ENCODE measurements at regions of chr12 and their contacts with region 1.

Region 1: GRCh38 chr12:120580787-120581723 is at the start of gene POP5:
- DNase-seq: peak; percentile 81 to 98 (median 92)
- ATAC-seq: peak; percentile 92
- H3K4me3 ChIP-seq: peak within 1 kb of the TSS; percentile 91 to 94
- H3K4me3 Mint-ChIP-seq: peak within 1 kb of the TSS; percentile 99
- H3K27ac ChIP-seq: peak within 1 kb of the TSS; percentile 71 to 76
- H3K27ac Mint-ChIP-seq: peak within 1 kb of the TSS; percentile 93
- H3K4me1 ChIP-seq: peaks cover 23% of the 10 kb centered on the region
- H3K4me1 Mint-ChIP-seq: peaks cover 44% of the 10 kb centered on the region
- H3K27me3 ChIP-seq: peaks cover 0 to 7% of the 10 kb centered on the region in 2 experiments
- H3K27me3 Mint-ChIP-seq: peaks cover 12% of the 10 kb centered on the region
- CTCF ChIP-seq: no peak
- total RNA-seq, gene POP5: 18.1 to 19.2 TPM

Region 2: GRCh38 chr12:120283318-120283717 is 297.7 kb before region 1 on chr12:
- CTCF ChIA-PET with region 1: no interaction called
- POLR2A ChIA-PET with region 1: no interaction called
- intact Hi-C with region 1: no loop called
- DNase-seq: no peak
- ATAC-seq: no peak
- H3K4me3 ChIP-seq: no peak overlapping the region
- H3K4me3 Mint-ChIP-seq: no peak overlapping the region
- H3K27ac ChIP-seq: no peak overlapping the region
- H3K27ac Mint-ChIP-seq: no peak overlapping the region
- H3K4me1 ChIP-seq: no peaks in the 10 kb centered on the region
- H3K4me1 Mint-ChIP-seq: no peaks in the 10 kb centered on the region
- H3K27me3 ChIP-seq: no peaks in the 10 kb centered on the region
- H3K27me3 Mint-ChIP-seq: no peaks in the 10 kb centered on the region
- CTCF ChIP-seq: no peak

Region 3: DNA sequence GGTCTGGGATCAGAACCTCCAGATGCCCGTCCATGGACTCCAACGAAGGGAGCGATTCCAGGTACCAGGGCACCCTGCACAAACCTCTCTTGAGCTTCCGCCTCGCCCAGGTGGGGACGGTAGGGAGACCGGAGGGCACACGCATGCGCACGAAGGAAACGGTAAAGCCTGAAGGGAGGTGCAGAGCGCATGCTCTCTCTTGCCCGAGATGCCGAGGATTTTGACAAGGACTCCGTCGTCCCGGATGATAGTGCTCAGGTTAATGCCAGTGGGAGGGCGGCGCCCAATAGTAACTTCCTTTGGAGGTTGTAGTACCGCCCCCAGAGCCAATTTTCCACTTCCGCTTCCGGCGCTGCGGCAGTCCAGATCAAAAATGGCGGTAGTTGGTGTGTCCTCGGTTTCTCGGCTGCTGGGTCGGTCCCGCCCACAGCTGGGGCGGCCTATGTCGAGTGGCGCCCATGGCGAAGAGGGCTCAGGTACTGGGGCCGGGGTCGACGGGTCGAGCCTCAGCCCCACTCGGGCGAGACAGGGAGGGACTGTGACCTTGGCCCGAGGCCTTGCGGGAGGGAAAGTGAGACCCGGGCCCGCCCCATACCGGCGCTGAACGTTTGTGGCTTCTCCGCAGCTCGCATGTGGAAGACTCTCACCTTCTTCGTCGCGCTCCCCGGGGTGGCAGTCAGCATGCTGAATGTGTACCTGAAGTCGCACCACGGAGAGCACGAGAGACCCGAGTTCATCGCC is 143.1 kb before region 1 on chr12 and contains the start of gene COX6A1:
- CTCF ChIA-PET with region 1: interaction called, 3 read pairs
- POLR2A ChIA-PET with region 1: no interaction called
- intact Hi-C with region 1: loop called (anchors 2 to 5 kb)
- DNase-seq: peak; percentile 91 to 100 (median 96)
- ATAC-seq: peak; percentile 95
- H3K4me3 ChIP-seq: peak within 1 kb of the TSS; percentile 74 to 76
- H3K4me3 Mint-ChIP-seq: peak within 1 kb of the TSS; percentile 88
- H3K27ac ChIP-seq: peak within 1 kb of the TSS; percentile 58 to 85
- H3K27ac Mint-ChIP-seq: peak within 1 kb of the TSS; percentile 91
- H3K4me1 ChIP-seq: peaks cover 26% of the 10 kb centered on the region
- H3K4me1 Mint-ChIP-seq: peaks cover 26% of the 10 kb centered on the region
- H3K27me3 ChIP-seq: no peaks in the 10 kb centered on the region
- H3K27me3 Mint-ChIP-seq: peaks cover 3% of the 10 kb centered on the region
- CTCF ChIP-seq: no peak
- total RNA-seq, gene COX6A1: 118 to 124 TPM

Region 4: GRCh38 chr12:120599672-120600552 is 18.9 kb after region 1 on chr12:
- CTCF ChIA-PET with region 1: interaction called, 10 read pairs
- POLR2A ChIA-PET with region 1: no interaction called
- intact Hi-C with region 1: no loop called
- DNase-seq: no peak
- ATAC-seq: no peak
- H3K4me3 ChIP-seq: no peak overlapping the region
- H3K4me3 Mint-ChIP-seq: no peak overlapping the region
- H3K27ac ChIP-seq: no peak overlapping the region
- H3K27ac Mint-ChIP-seq: no peak overlapping the region
- H3K4me1 ChIP-seq: no peaks in the 10 kb centered on the region
- H3K4me1 Mint-ChIP-seq: no peaks in the 10 kb centered on the region
- H3K27me3 ChIP-seq: no peaks in the 10 kb centered on the region
- H3K27me3 Mint-ChIP-seq: peaks cover 10% of the 10 kb centered on the region
- CTCF ChIP-seq: no peak

Region 5: DNA sequence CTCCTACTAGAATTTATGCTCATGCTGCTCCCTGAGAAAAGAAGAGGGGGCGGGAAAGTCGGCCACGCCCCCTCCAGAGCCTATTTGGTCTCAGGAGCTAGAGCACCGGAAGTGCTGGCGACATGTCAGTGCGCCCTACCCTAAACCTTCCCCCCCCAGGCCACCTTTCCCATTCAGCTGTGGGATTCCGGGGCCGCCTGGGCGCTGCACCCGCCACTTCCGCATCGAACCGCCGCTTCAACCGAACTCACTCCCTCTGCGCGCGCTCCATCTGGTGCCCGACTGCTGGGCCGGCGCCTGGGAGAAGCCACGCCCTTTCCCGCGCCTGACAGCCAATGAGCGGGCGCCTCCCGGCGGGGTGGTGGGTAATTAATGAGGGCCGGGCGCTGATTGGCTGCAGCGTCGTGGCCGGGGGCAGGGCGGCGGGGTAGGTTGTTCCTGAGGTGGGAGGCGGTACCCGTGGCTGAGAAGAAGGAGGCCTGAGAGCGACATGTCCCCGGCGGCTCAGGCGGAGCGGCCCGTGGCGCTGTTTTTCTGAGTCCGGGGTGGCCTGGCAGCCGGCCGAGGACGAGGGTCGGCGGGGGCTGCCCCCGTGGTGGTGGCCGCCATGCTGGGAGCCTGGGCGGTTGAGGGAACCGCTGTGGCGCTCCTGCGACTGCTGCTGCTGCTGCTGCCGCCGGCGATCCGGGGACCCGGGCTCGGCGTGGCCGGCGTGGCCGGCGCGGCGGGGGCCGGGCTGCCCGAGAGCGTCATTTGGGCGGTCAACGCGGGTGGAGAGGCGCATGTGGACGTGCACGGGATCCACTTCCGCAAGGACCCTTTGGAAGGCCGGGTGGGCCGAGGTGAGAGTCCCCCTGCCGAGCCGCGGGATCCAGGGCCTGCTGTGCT is 105.9 kb after region 1 on chr12 and contains the start of gene MLEC:
- CTCF ChIA-PET with region 1: no interaction called
- POLR2A ChIA-PET with region 1: no interaction called
- intact Hi-C with region 1: loop called (anchors 1 to 2 kb)
- DNase-seq: peak; percentile 98 to 99 (median 99)
- ATAC-seq: peak; percentile 83
- H3K4me3 ChIP-seq: peak within 1 kb of the TSS; percentile 88 to 90
- H3K4me3 Mint-ChIP-seq: peak within 1 kb of the TSS; percentile 91
- H3K27ac ChIP-seq: peak within 1 kb of the TSS; percentile 80 to 95
- H3K27ac Mint-ChIP-seq: peak within 1 kb of the TSS; percentile 92
- H3K4me1 ChIP-seq: peaks cover 29% of the 10 kb centered on the region
- H3K4me1 Mint-ChIP-seq: peaks cover 39% of the 10 kb centered on the region
- H3K27me3 ChIP-seq: no peaks in the 10 kb centered on the region
- H3K27me3 Mint-ChIP-seq: no peaks in the 10 kb centered on the region
- CTCF ChIP-seq: no peak
- total RNA-seq, gene MLEC: 20.3 to 22.5 TPM

Region 6: DNA sequence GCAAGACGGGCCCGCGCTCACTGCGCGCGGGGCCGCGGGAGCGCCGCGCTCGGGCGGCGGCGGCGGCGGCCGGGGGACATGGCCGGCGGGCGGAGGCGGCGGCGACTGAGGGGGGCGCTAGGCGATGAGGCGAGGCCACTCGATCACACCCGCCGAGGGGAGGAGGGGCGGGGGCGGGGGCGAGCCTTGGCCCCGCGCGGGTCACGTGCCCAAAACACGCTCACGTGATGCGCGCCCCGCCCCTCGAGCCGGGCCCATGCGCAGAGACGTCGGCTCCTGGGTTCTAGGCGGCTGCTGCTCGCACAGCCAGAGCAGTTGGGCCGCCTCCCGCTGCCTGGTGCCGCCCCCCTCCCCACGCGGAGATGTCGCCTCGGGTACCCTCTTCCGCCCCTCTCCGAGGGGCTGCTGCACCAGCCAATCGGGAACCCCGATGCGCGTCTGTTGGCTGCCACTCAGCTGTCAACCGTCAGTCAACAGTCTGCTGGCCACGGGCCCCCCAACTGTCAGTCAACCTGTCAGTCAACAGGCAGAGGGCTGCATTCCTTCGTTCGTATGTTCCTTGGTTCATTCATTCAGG is 323.2 kb after region 1 on chr12 and contains the start of gene SPPL3:
- CTCF ChIA-PET with region 1: no interaction called
- POLR2A ChIA-PET with region 1: no interaction called
- intact Hi-C with region 1: loop called in 1 of 2 experiments (anchors 5 kb)
- DNase-seq: peak; percentile 86 to 96 (median 93)
- ATAC-seq: peak; percentile 75
- H3K4me3 ChIP-seq: peak within 1 kb of the TSS; percentile 76 to 82
- H3K4me3 Mint-ChIP-seq: peak within 1 kb of the TSS; percentile 99
- H3K27ac ChIP-seq: peak within 1 kb of the TSS; percentile 66 to 84
- H3K27ac Mint-ChIP-seq: peak within 1 kb of the TSS; percentile 98
- H3K4me1 ChIP-seq: peaks cover 21% of the 10 kb centered on the region
- H3K4me1 Mint-ChIP-seq: peaks cover 32% of the 10 kb centered on the region
- H3K27me3 ChIP-seq: no peaks in the 10 kb centered on the region
- H3K27me3 Mint-ChIP-seq: no peaks in the 10 kb centered on the region
- CTCF ChIP-seq: no peak
- total RNA-seq, gene SPPL3: 42.3 to 42.9 TPM

Region 7: DNA sequence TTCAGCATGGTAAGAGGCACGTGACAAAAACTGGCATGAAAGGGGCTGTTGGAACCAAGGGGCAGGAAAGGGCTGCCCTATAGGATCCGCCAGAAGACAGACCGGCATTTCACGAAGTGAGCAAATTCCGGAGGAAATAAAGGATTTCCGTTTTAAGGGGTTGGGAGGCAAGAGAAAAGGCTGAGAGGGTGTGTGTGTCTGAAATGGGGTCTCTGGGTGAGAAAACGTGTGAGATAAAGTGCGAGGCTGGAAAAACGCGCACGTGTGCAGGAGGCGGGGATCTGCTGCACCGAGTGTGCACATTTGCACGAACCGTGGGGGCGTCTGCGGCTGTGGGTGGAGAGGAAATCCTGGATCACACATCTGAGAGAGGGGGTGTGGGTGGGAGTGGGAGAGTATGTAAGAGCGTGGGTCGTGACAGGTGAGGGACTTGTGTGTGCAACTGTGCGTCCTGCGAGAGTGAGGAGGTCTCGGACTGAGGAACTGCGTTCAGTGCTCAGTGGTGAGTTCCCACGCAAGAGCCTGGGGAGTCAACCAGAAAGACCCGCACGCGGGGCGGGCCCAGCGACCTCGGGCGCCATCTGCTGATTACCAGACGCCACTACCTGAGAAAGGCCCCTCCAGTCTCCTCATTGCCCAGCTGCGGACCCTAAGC is 514.6 kb after region 1 on chr12:
- CTCF ChIA-PET with region 1: interaction called, 3 read pairs
- POLR2A ChIA-PET with region 1: no interaction called
- intact Hi-C with region 1: loop called (anchors 1 to 5 kb)
- DNase-seq: peak; percentile 59 to 88 (median 81)
- ATAC-seq: peak; percentile 78
- H3K4me3 ChIP-seq: peak overlapping the region; percentile 44 to 47
- H3K4me3 Mint-ChIP-seq: peak overlapping the region; percentile 81
- H3K27ac ChIP-seq: no peak overlapping the region
- H3K27ac Mint-ChIP-seq: no peak overlapping the region
- H3K4me1 ChIP-seq: peaks cover 47% of the 10 kb centered on the region
- H3K4me1 Mint-ChIP-seq: peaks cover 49% of the 10 kb centered on the region
- H3K27me3 ChIP-seq: no peaks in the 10 kb centered on the region
- H3K27me3 Mint-ChIP-seq: no peaks in the 10 kb centered on the region
- CTCF ChIP-seq: peak; percentile 81